Naive thymus-derived CD4-positive, alpha-beta T cell (primary cell): ENCODE measurements at regions of chr7 and their contacts with region 1.

Region 1: GRCh38 chr7:95476904-95477594 is 8.7 kb upstream of the ASB4 start:
- DNase-seq: peak in 6 of 9 donors; percentile 14 to 53 (median 45)
- ATAC-seq: peak; percentile 80
- H3K4me3 ChIP-seq: no peak overlapping the region
- H3K4me3 Mint-ChIP-seq: peak overlapping the region in 4 of 10 donors; percentile 11 to 57 (median 40)
- H3K27ac ChIP-seq: no peak overlapping the region
- H3K27ac Mint-ChIP-seq: peak overlapping the region in 1 of 9 donors; percentile 60
- H3K4me1 ChIP-seq: no peaks in the 10 kb centered on the region
- H3K4me1 Mint-ChIP-seq: peaks cover 0 to 1% (median 0%) of the 10 kb centered on the region in 7 donors
- H3K27me3 ChIP-seq: no peaks in the 10 kb centered on the region
- H3K27me3 Mint-ChIP-seq: peaks cover 0 to 12% (median 5%) of the 10 kb centered on the region in 5 donors

Region 2: DNA sequence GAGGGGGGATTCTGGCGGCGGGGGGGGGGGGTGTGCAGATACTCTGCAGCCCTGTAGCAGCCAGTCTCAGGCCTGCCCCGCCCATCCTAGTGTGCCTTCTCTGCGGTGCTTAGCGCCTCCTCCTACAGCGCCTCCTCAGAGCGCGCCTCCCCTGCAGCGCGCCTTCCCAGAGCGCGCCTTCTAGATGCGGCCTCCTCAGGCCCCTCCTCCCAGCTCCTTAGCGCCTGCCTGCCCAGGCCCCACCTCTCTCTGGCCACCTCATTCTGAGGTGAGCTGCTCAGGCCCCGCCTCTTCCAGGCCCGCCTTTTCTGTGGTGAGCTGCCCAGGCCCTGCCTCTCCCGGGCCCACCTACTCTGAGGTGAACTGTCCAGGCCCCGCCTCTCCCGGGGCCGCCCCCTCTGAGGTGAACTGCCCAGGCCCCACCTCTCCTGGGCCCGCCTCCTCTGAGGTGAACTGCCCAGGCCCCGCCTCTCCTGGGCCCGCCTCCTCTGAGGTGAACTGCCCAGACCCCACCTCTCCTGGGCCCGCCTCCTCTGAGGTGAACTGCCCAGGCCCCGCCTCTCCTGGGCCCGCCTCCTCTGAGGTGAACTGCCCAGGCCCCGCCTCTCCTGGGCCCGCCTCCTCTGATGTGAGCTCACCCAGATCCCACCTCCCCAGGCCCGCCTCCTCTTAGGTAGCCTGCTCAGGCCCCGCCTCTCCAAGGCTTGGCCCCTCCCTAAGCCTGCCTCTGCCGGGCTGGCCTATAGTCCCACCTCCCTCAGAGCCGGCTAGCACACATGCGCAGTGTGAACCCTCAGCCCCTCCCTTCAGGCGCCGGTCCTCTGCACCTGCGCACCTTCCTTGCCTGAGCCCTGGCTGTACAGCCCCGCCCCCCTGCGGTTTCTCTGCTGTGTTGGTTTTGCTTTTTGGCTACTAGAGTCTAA is 819.0 kb before region 1 on chr7:
- CTCF ChIA-PET with region 1: no interaction called
- POLR2A ChIA-PET with region 1: no interaction called
- intact Hi-C with region 1: loop called in 1 of 2 experiments (anchors 5 kb)
- DNase-seq: peak; percentile 83 to 97 (median 95)
- ATAC-seq: peak; percentile 88
- H3K4me3 ChIP-seq: peak overlapping the region; percentile 85
- H3K4me3 Mint-ChIP-seq: peak overlapping the region; percentile 83 to 91 (median 88)
- H3K27ac ChIP-seq: no peak overlapping the region
- H3K27ac Mint-ChIP-seq: peak overlapping the region in 6 of 9 donors; percentile 17 to 84 (median 54)
- H3K4me1 ChIP-seq: peaks cover 15 to 16% of the 10 kb centered on the region in 2 donors
- H3K4me1 Mint-ChIP-seq: peaks cover 8 to 24% (median 17%) of the 10 kb centered on the region in 7 donors
- H3K27me3 ChIP-seq: peaks cover 14 to 21% of the 10 kb centered on the region in 2 donors
- H3K27me3 Mint-ChIP-seq: peaks cover 11 to 28% (median 23%) of the 10 kb centered on the region in 5 donors

Region 3: DNA sequence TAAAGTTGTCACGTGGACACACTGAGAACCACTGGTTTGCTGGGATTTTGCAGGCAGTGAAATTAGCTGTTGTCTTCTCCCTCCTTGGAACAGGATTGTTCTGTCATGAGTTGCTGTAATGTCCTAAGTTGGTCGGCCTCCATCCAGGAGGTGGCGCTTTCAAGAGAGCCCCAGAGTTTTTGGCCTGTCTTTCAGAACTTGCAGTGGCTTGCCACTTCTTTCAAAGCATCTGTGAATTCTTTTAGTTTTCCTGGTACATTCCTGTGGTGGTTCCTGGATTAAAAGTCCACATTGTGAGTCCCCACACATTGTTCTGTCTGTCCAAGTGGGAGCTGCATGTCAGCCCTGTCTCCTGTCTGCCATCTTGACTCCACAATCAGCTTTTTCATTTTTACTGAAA is 286.5 kb before region 1 on chr7:
- CTCF ChIA-PET with region 1: no interaction called
- POLR2A ChIA-PET with region 1: no interaction called
- intact Hi-C with region 1: loop called (anchors 1 to 2 kb)
- DNase-seq: no peak
- ATAC-seq: no peak
- H3K4me3 ChIP-seq: no peak overlapping the region
- H3K4me3 Mint-ChIP-seq: no peak overlapping the region
- H3K27ac ChIP-seq: no peak overlapping the region
- H3K27ac Mint-ChIP-seq: no peak overlapping the region
- H3K4me1 ChIP-seq: no peaks in the 10 kb centered on the region
- H3K4me1 Mint-ChIP-seq: no peaks in the 10 kb centered on the region
- H3K27me3 ChIP-seq: no peaks in the 10 kb centered on the region
- H3K27me3 Mint-ChIP-seq: peaks cover 0 to 13% (median 5%) of the 10 kb centered on the region in 5 donors

Region 4: GRCh38 chr7:95246831-95247370 is 230.1 kb before region 1 on chr7:
- CTCF ChIA-PET with region 1: no interaction called
- POLR2A ChIA-PET with region 1: no interaction called
- intact Hi-C with region 1: loop called in 1 of 2 experiments (anchors 2 kb)
- DNase-seq: peak in 2 of 9 donors; percentile 7 to 25
- ATAC-seq: no peak
- H3K4me3 ChIP-seq: no peak overlapping the region
- H3K4me3 Mint-ChIP-seq: no peak overlapping the region
- H3K27ac ChIP-seq: no peak overlapping the region
- H3K27ac Mint-ChIP-seq: no peak overlapping the region
- H3K4me1 ChIP-seq: no peaks in the 10 kb centered on the region
- H3K4me1 Mint-ChIP-seq: peaks cover 0 to 2% (median 0%) of the 10 kb centered on the region in 7 donors
- H3K27me3 ChIP-seq: no peaks in the 10 kb centered on the region
- H3K27me3 Mint-ChIP-seq: peaks cover 2 to 18% (median 14%) of the 10 kb centered on the region in 5 donors

Region 5: GRCh38 chr7:95396136-95397032 is 80.7 kb before region 1 on chr7 and contains the start of gene PON3:
- CTCF ChIA-PET with region 1: interaction called, 11 read pairs
- POLR2A ChIA-PET with region 1: no interaction called
- intact Hi-C with region 1: loop called (anchors 1 to 2 kb)
- DNase-seq: peak in 8 of 9 donors; percentile 5 to 36 (median 16)
- ATAC-seq: peak; percentile 84
- H3K4me3 ChIP-seq: peak within 1 kb of the TSS; percentile 34
- H3K4me3 Mint-ChIP-seq: peak within 1 kb of the TSS; percentile 43 to 82 (median 71)
- H3K27ac ChIP-seq: no peak within 1 kb of the TSS
- H3K27ac Mint-ChIP-seq: no peak within 1 kb of the TSS
- H3K4me1 ChIP-seq: no peaks in the 10 kb centered on the region
- H3K4me1 Mint-ChIP-seq: peaks cover 0 to 10% (median 0%) of the 10 kb centered on the region in 7 donors
- H3K27me3 ChIP-seq: peaks cover 4 to 7% of the 10 kb centered on the region in 2 donors
- H3K27me3 Mint-ChIP-seq: peaks cover 39 to 62% (median 52%) of the 10 kb centered on the region in 5 donors
- total RNA-seq, gene PON3: not detected

Region 6: DNA sequence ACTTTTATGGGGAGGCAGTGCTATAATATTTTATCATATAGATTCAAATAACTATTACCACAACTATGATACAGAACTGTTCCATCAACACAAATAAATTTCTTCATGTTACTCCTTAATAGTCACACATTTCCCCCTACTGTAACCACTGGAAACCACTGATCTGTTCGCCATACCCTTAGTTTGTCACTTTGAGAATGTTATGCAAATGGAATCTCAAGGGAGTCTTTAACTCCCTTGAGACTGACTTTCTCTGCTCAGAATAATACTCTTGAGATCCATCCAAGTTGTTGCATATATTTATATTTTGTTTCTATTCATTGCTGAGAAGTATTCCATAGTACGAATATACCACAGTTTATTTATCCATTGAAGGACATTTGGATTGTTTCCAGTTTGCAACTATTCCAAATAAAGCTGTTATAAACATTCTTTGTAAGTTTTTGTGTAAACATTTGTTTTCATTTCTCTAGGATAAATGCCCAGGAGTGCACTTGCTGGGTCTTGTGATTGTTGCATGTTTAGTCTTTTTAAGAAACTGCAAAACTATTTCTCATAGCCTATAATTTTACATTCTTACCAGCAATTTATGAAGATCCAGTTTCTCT is 22.5 kb before region 1 on chr7:
- CTCF ChIA-PET with region 1: no interaction called
- POLR2A ChIA-PET with region 1: no interaction called
- intact Hi-C with region 1: no loop called
- DNase-seq: no peak
- ATAC-seq: no peak
- H3K4me3 ChIP-seq: no peak overlapping the region
- H3K4me3 Mint-ChIP-seq: no peak overlapping the region
- H3K27ac ChIP-seq: no peak overlapping the region
- H3K27ac Mint-ChIP-seq: no peak overlapping the region
- H3K4me1 ChIP-seq: no peaks in the 10 kb centered on the region
- H3K4me1 Mint-ChIP-seq: no peaks in the 10 kb centered on the region
- H3K27me3 ChIP-seq: no peaks in the 10 kb centered on the region
- H3K27me3 Mint-ChIP-seq: peaks cover 0 to 16% (median 12%) of the 10 kb centered on the region in 5 donors